Endothelial cell of umbilical vein (primary cell): ENCODE measurements at regions of chr1 and their contacts with region 1.

Region 1: GRCh38 chr1:97489834-97490233 is 431.0 kb downstream of the DPYD start:
- DNase-seq: peak; percentile 78
- H3K4me3 ChIP-seq: no peak overlapping the region
- H3K27ac ChIP-seq: peak overlapping the region; percentile 5
- H3K4me1 ChIP-seq: peaks cover 11% of the 10 kb centered on the region
- H3K27me3 ChIP-seq: no peaks in the 10 kb centered on the region
- CTCF ChIP-seq: no peak
- POLR2A ChIP-seq: no peak

Region 2: GRCh38 chr1:97451046-97451826 is 38.6 kb before region 1 on chr1:
- CTCF ChIA-PET with region 1: no interaction called
- POLR2A ChIA-PET with region 1: no interaction called
- dilution Hi-C with region 1: no loop called
- intact Hi-C with region 1: loop called (anchors 5 kb)
- DNase-seq: no peak
- H3K4me3 ChIP-seq: no peak overlapping the region
- H3K27ac ChIP-seq: peak overlapping the region; percentile 55
- H3K4me1 ChIP-seq: peaks cover 11% of the 10 kb centered on the region
- H3K27me3 ChIP-seq: no peaks in the 10 kb centered on the region
- CTCF ChIP-seq: no peak
- POLR2A ChIP-seq: no peak

Region 3: GRCh38 chr1:97505816-97506215 is 16.0 kb after region 1 on chr1:
- CTCF ChIA-PET with region 1: no interaction called
- POLR2A ChIA-PET with region 1: no interaction called
- dilution Hi-C with region 1: no loop called
- intact Hi-C with region 1: no loop called
- DNase-seq: no peak
- H3K4me3 ChIP-seq: no peak overlapping the region
- H3K27ac ChIP-seq: no peak overlapping the region
- H3K4me1 ChIP-seq: no peaks in the 10 kb centered on the region
- H3K27me3 ChIP-seq: no peaks in the 10 kb centered on the region
- CTCF ChIP-seq: no peak
- POLR2A ChIP-seq: no peak